ENCODE measurements at regions of chr12 and their contacts with region 1.

Region 1: DNA sequence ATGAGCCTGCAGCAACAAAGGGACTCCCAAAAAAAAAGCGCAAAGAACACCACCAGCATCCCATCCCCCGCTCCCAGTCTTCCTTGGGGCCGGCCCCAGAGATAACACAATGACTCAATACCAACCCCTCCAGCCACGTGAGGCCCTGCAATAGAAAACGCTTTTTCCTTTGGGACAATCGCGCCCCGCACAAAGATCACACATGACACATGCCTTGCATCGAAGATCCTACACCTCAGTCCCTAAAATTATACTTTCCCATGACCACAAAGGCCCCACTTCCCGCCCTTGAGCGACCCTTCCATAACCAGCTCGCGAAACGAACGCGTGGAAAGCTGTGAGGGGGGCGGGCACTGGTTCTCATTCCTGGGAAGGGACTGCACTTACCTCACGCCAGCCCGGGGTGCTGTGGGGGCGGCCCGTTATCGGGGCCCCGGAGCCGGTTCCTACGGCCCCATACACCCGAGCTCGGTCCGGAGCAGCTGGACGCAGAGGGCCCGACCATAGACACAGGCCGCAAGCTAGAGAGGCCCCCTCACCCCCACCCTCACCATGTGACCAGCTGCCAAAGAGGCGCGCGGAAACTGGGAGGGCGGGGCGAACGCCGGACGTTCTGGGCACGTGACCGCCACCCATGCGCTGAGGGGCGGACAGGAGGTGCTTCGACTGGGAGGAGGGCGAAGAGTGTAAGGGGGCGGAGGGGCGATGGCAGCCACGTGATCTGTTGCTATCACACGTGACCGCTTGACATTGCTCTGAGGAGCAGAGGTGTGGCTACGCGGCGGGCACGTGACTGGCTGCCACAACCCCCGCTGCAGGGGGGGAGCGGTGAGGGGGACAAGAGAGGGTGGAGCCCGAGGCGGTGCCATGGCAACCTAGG is at the start of gene CDK4:
- DNase-seq: peak; percentile 97 to 100 (median 99)
- H3K4me3 ChIP-seq: peak within 1 kb of the TSS; percentile 30 to 80
- H3K4me3 Mint-ChIP-seq: peak within 1 kb of the TSS; percentile 82 to 98 (median 90)
- H3K27ac ChIP-seq: peak within 1 kb of the TSS; percentile 82
- H3K27ac Mint-ChIP-seq: peak within 1 kb of the TSS; percentile 87 to 100 (median 99)
- H3K4me1 ChIP-seq: peaks cover 50% of the 10 kb centered on the region
- H3K4me1 Mint-ChIP-seq: peaks cover 46 to 58% (median 51%) of the 10 kb centered on the region in 4 donors
- H3K27me3 ChIP-seq: no peaks in the 10 kb centered on the region
- H3K27me3 Mint-ChIP-seq: no peaks in the 10 kb centered on the region
- total RNA-seq, gene CDK4: 44.4 to 48.3 TPM

Region 2: DNA sequence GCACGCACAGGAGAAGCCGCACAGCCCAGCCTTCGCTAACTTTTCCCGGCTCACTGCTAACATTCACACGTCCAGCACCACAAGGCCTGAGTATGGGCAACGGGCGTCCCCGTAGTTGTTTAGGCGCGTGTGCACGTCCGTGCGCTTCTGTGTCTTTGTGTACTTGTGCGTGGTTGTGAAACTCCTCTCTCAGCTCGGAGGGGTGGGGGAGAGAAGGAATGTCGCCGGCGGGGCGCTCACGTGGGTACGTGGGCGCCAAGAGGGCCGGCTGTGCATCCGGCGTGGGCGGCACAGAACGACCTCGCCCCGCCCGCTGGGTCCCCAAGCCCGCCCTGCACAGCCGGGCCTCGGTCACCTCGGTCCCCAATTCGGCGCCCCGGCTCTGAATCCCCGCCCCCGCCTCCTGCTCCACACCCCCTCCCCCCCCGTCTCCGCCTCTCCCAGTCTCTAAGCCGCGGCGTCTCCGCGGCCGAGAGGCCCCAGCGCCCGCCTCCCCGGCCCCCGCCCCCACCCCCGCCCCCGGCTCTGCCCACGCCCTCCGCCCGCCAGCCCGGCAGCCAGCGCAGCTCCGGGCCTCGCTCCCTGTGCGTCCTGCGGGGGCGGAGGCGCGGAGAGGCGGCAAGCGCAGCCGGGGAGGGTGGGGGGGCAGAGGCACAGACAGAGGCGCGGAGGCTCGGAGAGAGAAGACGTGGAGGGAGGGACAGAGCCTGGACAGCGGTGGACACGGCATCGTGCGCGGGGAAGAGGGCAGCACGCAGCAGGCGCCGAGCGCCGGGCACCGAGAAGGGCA is 663.4 kb before region 1 on chr12 and contains the start of gene NAB2:
- CTCF ChIA-PET with region 1: no interaction called
- POLR2A ChIA-PET with region 1: no interaction called
- intact Hi-C with region 1: loop called (anchors 5 kb)
- DNase-seq: peak; percentile 89 to 94 (median 92)
- H3K4me3 ChIP-seq: peak within 1 kb of the TSS; percentile 90 to 91
- H3K4me3 Mint-ChIP-seq: peak within 1 kb of the TSS; percentile 92 to 98 (median 95)
- H3K27ac ChIP-seq: peak within 1 kb of the TSS; percentile 97
- H3K27ac Mint-ChIP-seq: peak within 1 kb of the TSS; percentile 97 to 99 (median 98)
- H3K4me1 ChIP-seq: peaks cover 52% of the 10 kb centered on the region
- H3K4me1 Mint-ChIP-seq: peaks cover 40 to 78% (median 53%) of the 10 kb centered on the region in 4 donors
- H3K27me3 ChIP-seq: no peaks in the 10 kb centered on the region
- H3K27me3 Mint-ChIP-seq: no peaks in the 10 kb centered on the region
- total RNA-seq, gene NAB2: 17.5 to 19.5 TPM

Region 3: DNA sequence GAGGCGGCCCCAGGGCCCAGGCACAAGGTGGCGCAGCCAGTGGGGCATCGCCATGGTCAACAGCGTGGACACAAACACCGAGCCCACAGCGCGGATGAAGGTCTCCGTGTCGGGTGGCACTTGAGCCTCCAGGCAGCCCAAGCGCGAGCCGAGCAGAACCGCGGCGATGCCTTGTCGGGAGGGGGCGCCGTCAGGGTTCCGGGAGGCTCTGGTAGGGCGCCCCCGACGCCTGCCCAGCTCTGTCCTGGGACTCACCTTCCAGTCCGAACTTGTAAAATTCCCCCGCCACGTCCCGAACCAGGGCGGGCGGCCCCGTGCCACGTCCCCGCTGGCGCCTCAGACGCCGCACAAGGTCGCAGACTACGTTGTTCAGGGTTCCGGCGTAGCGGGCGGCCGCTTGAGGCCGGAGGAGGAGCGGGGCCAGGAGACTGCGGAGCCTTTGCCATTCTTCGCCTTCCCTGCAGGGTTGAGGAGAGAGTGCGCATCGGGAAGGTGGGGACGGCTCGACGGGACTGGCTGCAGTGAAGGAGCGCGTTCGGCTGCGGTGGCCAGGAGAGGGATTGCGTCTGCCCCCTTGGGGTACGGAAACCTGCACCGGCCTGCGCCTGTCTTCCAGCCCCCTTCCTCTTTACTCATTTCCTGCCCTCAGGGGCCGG is 13.1 kb after region 1 on chr12:
- CTCF ChIA-PET with region 1: interaction called, 36 read pairs
- POLR2A ChIA-PET with region 1: interaction called, 26 read pairs
- intact Hi-C with region 1: loop called (anchors 1 kb)
- DNase-seq: peak in 4 of 5 donors; percentile 39 to 51 (median 48)
- H3K4me3 ChIP-seq: peak overlapping the region; percentile 37 to 60
- H3K4me3 Mint-ChIP-seq: peak overlapping the region; percentile 85 to 94 (median 88)
- H3K27ac ChIP-seq: peak overlapping the region; percentile 26
- H3K27ac Mint-ChIP-seq: peak overlapping the region in 6 of 7 donors; percentile 23 to 74 (median 34)
- H3K4me1 ChIP-seq: peaks cover 30% of the 10 kb centered on the region
- H3K4me1 Mint-ChIP-seq: peaks cover 8 to 47% (median 23%) of the 10 kb centered on the region in 4 donors
- H3K27me3 ChIP-seq: peaks cover 19% of the 10 kb centered on the region
- H3K27me3 Mint-ChIP-seq: peaks cover 6 to 13% of the 10 kb centered on the region in 2 donors

Region 4: GRCh38 chr12:57771708-57772428 is 19.8 kb after region 1 on chr12 and contains the start of gene METTL1:
- CTCF ChIA-PET with region 1: interaction called, 36 read pairs
- POLR2A ChIA-PET with region 1: interaction called, 26 read pairs
- intact Hi-C with region 1: loop called (anchors 1 kb)
- DNase-seq: peak; percentile 88 to 95 (median 91)
- H3K4me3 ChIP-seq: peak within 1 kb of the TSS; percentile 98 to 99
- H3K4me3 Mint-ChIP-seq: peak within 1 kb of the TSS; percentile 95 to 100 (median 96)
- H3K27ac ChIP-seq: peak within 1 kb of the TSS; percentile 84
- H3K27ac Mint-ChIP-seq: peak within 1 kb of the TSS; percentile 94 to 99 (median 98)
- H3K4me1 ChIP-seq: peaks cover 30% of the 10 kb centered on the region
- H3K4me1 Mint-ChIP-seq: peaks cover 14 to 33% (median 21%) of the 10 kb centered on the region in 4 donors
- H3K27me3 ChIP-seq: peaks cover 4% of the 10 kb centered on the region
- H3K27me3 Mint-ChIP-seq: peaks cover 0 to 2% of the 10 kb centered on the region in 2 donors
- total RNA-seq, gene METTL1: 9.9 to 10.9 TPM

Measured in CD4-positive, alpha-beta memory T cell (primary cell).